ENCODE measurements at regions of chr15 and their contacts with region 1.

Region 1: DNA sequence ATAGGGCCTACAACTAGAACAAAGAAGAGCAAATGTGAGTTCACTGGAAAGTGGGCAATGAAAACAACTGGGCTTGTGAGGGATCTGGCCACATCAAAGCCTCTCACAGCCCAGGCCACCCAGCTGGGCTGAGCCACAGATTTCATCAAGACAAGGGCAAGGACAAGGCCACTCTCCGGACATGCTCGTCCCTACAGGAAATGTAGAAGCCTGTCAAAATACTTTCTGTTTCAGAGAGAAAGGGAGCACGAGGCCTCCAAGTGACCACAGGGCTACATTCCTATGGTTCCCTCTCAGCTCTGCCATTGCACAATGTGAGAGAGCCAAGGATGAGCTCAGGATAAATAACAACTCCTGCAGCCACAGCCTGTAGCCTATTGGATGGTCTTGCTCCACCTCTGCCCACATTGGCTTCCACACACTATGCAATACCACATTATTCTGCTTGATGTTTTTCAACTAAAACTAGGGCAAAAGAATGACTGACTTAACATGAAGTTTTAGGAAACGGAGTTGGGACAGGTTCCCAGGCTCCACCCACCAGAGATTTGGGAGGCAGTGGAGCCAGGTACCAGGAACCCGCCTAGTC is 12.1 kb downstream of the TBC1D2B start:
- DNase-seq: peak; percentile 94
- H3K4me3 ChIP-seq: peak overlapping the region; percentile 25; the same call in 1 of the 2 replicates
- H3K27ac ChIP-seq: peak overlapping the region; percentile 98
- H3K27me3 ChIP-seq: no peaks in the 10 kb centered on the region
- CTCF ChIP-seq: no peak

Region 2: DNA sequence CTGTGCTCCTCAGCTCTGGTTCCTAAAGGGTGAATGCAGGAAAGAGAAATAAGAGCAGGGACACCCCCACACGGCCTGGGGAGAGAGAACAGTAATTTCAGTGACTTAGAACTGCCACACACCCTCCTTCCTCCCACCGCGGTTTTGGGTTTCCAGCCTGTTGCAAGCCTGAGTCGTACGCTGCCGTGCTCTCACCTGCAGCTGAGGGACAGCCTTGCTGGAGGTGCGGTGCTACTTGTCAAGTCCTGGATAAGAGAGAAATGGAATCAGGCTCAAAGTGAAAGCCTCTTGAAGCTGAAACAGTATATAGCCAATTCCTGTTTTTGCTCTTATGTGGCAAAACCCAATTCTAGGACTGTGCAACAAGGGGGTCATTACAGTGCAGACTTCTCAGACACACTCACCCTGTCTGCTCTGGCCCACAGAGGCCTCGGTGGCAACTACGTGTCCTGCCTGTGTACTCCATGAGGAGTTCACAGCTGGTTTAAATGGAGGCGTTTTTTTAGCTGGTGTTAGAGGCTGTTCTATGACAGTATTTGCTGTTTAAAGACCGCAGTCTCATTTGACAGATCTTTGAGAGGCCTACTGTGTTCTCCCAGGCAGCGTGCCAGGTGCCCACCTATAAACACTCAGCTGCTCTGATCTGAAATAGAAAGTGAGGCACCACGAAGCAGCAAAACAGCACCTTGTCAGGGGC is 30.7 kb before region 1 on chr15:
- CTCF ChIA-PET with region 1: no interaction called
- POLR2A ChIA-PET with region 1: interaction called, 11 read pairs
- DNase-seq: no peak
- H3K4me3 ChIP-seq: 0 out of 2 replicates have a peak overlapping the region, but pooled peaks have one; percentile 5
- H3K27ac ChIP-seq: peak overlapping the region; percentile 35
- H3K27me3 ChIP-seq: no peaks in the 10 kb centered on the region
- CTCF ChIP-seq: no peak

Region 3: GRCh38 chr15:78049691-78050440 is 15.5 kb before region 1 on chr15:
- CTCF ChIA-PET with region 1: no interaction called
- POLR2A ChIA-PET with region 1: interaction called, 24 read pairs
- DNase-seq: no peak
- H3K4me3 ChIP-seq: no peak overlapping the region
- H3K27ac ChIP-seq: peak overlapping the region; percentile 25
- H3K27me3 ChIP-seq: no peaks in the 10 kb centered on the region
- CTCF ChIP-seq: no peak

Measured in AG04450 (cell line).